ENCODE measurements at regions of chr7 and their contacts with region 1.

Region 1: DNA sequence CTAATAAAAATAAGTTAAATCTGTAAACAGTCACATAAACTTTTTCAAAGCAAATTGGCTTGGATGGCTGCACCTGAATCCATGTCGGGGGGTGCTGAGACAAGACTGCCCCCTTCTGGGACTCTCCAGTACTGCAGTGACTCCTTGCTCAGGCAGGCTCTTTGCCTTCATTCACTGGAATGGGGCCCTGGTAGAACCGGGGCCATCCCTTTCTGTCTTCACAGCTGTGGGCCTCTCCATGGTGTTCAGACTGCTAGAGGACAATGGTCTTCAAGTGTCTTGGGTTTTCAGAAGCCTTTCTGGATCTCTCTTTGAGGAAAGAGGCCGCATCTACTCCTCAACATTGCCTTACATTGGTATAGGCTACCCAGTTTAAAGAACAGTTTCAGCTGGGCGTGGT is 16.1 kb upstream of the IMPDH1 start:
- DNase-seq: peak in 2 of 4 donors; percentile 60 to 68
- ATAC-seq: peak; percentile 89
- H3K4me3 ChIP-seq: no peak overlapping the region
- H3K27ac ChIP-seq: no peak overlapping the region
- H3K4me1 ChIP-seq: no peaks in the 10 kb centered on the region
- H3K27me3 ChIP-seq: no peaks in the 10 kb centered on the region
- CTCF ChIP-seq: peak; percentile 88 to 97

Region 2: GRCh38 chr7:127983804-127984332 is 442.0 kb before region 1 on chr7:
- intact Hi-C with region 1: no loop called
- DNase-seq: no peak
- ATAC-seq: peak; percentile 76
- H3K4me3 ChIP-seq: no peak overlapping the region
- H3K27ac ChIP-seq: no peak overlapping the region
- H3K4me1 ChIP-seq: no peaks in the 10 kb centered on the region
- H3K27me3 ChIP-seq: no peaks in the 10 kb centered on the region
- CTCF ChIP-seq: no peak

Region 3: GRCh38 chr7:128209229-128210035 is 216.4 kb before region 1 on chr7:
- intact Hi-C with region 1: no loop called
- DNase-seq: peak; percentile 67 to 88 (median 78)
- ATAC-seq: peak; percentile 99
- H3K4me3 ChIP-seq: no peak overlapping the region
- H3K27ac ChIP-seq: no peak overlapping the region
- H3K4me1 ChIP-seq: peaks cover 0 to 6% of the 10 kb centered on the region in 2 donors
- H3K27me3 ChIP-seq: peaks cover 0 to 58% of the 10 kb centered on the region in 2 donors
- CTCF ChIP-seq: peak; percentile 96 to 97

Region 4: DNA sequence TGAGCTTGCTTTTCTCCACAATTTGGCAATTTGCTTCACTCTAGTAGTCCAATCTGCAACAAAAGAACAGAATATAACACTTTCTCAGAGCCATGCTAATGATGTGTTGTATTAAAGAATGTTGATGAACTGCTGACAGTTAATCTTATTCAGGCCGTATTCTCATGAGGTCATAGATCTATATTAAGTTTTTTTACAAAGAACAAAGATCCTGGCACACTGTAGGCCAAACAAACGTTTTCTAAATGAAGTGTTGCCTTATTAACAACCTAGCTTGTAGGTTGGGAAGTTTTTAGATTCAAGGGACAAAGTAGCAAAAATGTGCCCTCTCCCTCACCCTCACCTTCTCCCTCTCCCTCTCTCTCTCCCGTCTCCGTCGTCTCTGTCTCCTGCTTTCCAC is 36.6 kb after region 1 on chr7:
- intact Hi-C with region 1: loop called in 1 of 2 experiments (anchors 5 kb)
- DNase-seq: peak in 2 of 4 donors; percentile 81 to 85
- ATAC-seq: no peak
- H3K4me3 ChIP-seq: no peak overlapping the region
- H3K27ac ChIP-seq: peak overlapping the region in 1 of 2 donors; percentile 58
- H3K4me1 ChIP-seq: peaks cover 3 to 22% of the 10 kb centered on the region in 2 donors
- H3K27me3 ChIP-seq: no peaks in the 10 kb centered on the region
- CTCF ChIP-seq: no peak

Region 5: GRCh38 chr7:128799451-128799850 is 373.6 kb after region 1 on chr7:
- intact Hi-C with region 1: no loop called
- DNase-seq: no peak
- ATAC-seq: no peak
- H3K4me3 ChIP-seq: no peak overlapping the region
- H3K27ac ChIP-seq: no peak overlapping the region
- H3K4me1 ChIP-seq: no peaks in the 10 kb centered on the region
- H3K27me3 ChIP-seq: peaks cover 0 to 3% of the 10 kb centered on the region in 2 donors
- CTCF ChIP-seq: no peak

Measured in left lung (tissue), 14 donors.